ENCODE measurements at regions of chr15 and their contacts with region 1.

Region 1: DNA sequence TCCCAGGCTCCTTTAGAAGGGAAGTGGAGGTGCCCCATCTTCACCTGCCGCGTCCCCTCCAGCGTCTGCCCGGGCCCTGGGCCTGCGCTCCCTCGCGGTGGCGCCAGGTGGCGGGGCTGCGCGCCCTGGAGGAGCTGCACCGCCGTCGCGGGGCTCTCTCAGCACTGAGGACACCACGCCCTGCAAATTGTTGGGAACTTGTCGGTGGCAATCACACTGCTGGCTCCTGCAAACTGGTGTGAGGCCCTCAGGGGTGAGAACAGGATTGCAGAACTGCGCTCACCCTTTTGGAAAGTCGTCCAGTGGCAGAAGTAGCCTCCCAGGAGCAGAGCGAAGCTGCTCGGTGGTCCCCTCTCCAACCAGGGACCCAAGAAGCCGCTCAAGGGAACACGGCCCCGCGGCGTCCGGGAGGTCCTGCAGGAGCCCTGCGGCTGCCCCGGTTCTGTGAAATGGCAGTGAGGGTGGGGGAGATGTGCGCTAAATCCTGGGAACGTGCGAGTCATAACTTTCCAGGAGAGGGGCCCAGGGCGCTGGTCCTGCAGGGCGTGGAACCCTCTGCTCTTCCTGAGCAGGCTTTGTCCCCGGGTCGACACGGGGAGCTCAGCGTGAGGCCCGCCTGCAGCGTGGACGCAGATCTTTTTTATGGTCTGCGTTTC is 995 bp upstream of the LRRK1 start:
- DNase-seq: peak in 4 of 5 donors; percentile 46 to 59 (median 50)
- H3K4me3 ChIP-seq: peak overlapping the region; percentile 23 to 38
- H3K4me3 Mint-ChIP-seq: peak overlapping the region; percentile 74 to 89 (median 84)
- H3K27ac ChIP-seq: no peak overlapping the region
- H3K27ac Mint-ChIP-seq: no peak overlapping the region
- H3K4me1 ChIP-seq: peaks cover 13% of the 10 kb centered on the region
- H3K4me1 Mint-ChIP-seq: peaks cover 7 to 22% (median 8%) of the 10 kb centered on the region in 4 donors
- H3K27me3 ChIP-seq: peaks cover 21% of the 10 kb centered on the region
- H3K27me3 Mint-ChIP-seq: peaks cover 46 to 47% of the 10 kb centered on the region in 2 donors

Region 2: GRCh38 chr15:101000271-101000681 is 82.1 kb after region 1 on chr15:
- CTCF ChIA-PET with region 1: interaction called, 74 read pairs
- POLR2A ChIA-PET with region 1: no interaction called
- intact Hi-C with region 1: no loop called
- DNase-seq: no peak
- H3K4me3 ChIP-seq: no peak overlapping the region
- H3K4me3 Mint-ChIP-seq: no peak overlapping the region
- H3K27ac ChIP-seq: no peak overlapping the region
- H3K27ac Mint-ChIP-seq: no peak overlapping the region
- H3K4me1 ChIP-seq: no peaks in the 10 kb centered on the region
- H3K4me1 Mint-ChIP-seq: no peaks in the 10 kb centered on the region
- H3K27me3 ChIP-seq: no peaks in the 10 kb centered on the region
- H3K27me3 Mint-ChIP-seq: peaks cover 12 to 13% of the 10 kb centered on the region in 2 donors